AG04449 (cell line): ENCODE measurements at regions of chr7 and their contacts with region 1.

Region 1: GRCh38 chr7:149005241-149006050 is 22.9 kb downstream of the PDIA4 start:
- DNase-seq: no peak
- H3K4me3 ChIP-seq: no peak overlapping the region
- CTCF ChIP-seq: peak; percentile 81

Region 2: GRCh38 chr7:148987010-148987750 is 18.3 kb before region 1 on chr7:
- CTCF ChIA-PET with region 1: interaction called, 88 read pairs
- POLR2A ChIA-PET with region 1: no interaction called
- DNase-seq: peak; percentile 55
- H3K4me3 ChIP-seq: peak overlapping the region; percentile 68
- CTCF ChIP-seq: no peak

Region 3: GRCh38 chr7:149060156-149060555 is 54.7 kb after region 1 on chr7:
- CTCF ChIA-PET with region 1: interaction called, 94 read pairs
- POLR2A ChIA-PET with region 1: interaction called, 3 read pairs
- DNase-seq: no peak
- H3K4me3 ChIP-seq: no peak overlapping the region
- CTCF ChIP-seq: no peak

Region 4: DNA sequence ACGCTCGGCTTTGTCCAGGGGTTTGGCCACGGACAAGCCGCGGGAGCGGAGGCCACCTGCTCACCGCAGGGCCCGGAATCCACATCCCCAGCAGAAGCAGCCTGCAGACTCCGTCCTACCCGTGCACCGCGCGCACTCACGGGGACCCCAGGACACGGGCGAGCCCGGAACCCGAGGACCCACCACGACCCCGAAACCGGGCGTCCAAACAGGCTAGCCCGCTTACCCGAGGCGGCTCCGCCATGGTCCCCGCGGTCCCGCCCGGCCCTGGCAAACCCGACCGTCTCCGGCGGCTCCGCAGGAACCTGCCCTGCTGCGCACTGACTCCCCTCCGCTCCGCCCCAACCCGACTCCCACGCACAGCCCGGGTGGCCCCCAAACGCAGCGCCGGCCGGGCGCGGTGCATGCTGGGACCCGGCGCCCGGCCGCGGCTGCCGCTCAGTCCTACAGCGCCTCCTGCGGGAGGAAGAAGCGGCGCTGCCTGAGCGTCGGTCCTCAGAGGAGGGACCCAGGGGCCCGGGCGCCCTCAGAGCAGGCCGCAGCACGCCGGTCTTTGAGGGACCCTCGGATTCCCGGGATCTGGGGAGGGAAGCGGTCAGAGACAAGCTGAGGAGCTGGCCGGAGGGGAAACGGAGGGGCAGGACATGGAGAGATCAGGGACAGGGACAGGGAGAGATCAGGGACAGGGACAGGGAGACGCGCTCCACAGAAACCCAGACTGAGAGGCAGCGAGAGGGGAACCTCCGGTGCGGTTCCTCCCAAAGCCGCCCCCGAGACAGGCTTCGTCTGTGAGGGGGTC is 85.2 kb after region 1 on chr7 and contains the start of gene ZNF786:
- CTCF ChIA-PET with region 1: interaction called, 31 read pairs
- POLR2A ChIA-PET with region 1: no interaction called
- DNase-seq: no peak
- H3K4me3 ChIP-seq: peak within 1 kb of the TSS; percentile 90
- CTCF ChIP-seq: peak; percentile 91

Region 5: GRCh38 chr7:149125863-149126661 is 120.6 kb after region 1 on chr7 and contains the start of gene ZNF425:
- CTCF ChIA-PET with region 1: interaction called, 12 read pairs
- POLR2A ChIA-PET with region 1: interaction called, 3 read pairs
- DNase-seq: peak; percentile 24
- H3K4me3 ChIP-seq: peak within 1 kb of the TSS; percentile 96
- CTCF ChIP-seq: peak; percentile 97